Right lobe of liver (tissue), 6 donors: ENCODE measurements at regions of chr14 and their contacts with region 1.

Region 1: DNA sequence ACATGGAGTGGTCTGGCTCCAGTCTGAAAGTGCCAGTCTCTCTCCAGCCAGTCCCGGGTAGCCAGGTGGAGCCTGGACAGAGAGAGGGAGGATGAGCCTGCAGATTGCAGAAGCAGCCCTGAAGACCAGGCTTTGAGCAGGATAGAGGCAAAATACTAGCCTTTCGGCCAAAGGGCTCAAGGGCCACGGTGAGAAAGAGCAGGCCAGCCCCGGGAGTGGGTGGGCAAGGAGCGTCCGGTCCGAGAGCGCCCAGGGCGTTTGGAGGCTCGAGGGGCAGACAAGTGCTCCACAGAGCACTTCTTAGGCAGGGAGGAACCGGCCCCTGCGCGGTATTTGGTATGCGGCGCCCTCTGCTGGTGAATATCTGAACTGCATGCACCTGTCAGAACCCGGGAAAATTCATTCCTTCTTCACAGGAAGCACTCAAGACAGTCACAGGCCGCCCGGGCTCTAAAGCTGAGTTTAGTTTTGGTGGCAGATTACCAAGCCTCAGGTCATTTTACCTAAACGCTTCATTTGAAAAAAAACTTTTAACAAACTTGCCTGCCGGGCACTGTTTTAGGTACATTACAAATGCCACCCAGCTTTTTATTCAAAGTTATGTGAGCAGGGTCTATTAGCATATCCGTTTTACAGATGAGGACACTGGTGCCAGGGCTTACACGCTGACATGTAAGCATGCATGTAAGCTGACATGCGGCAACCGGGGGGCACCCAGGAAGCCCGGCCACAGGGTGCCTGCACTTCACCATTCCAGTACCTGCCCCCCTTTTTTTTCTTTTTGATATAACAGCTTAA is 21.0 kb upstream of the PSMC1 start:
- DNase-seq: peak; percentile 67 to 73 (median 71)
- ATAC-seq: peak; percentile 96 to 99 (median 98)
- H3K4me3 ChIP-seq: no peak overlapping the region
- H3K27ac ChIP-seq: no peak overlapping the region
- H3K4me1 ChIP-seq: peaks cover 0 to 3% (median 0%) of the 10 kb centered on the region in 4 donors
- H3K27me3 ChIP-seq: no peaks in the 10 kb centered on the region
- CTCF ChIP-seq: peak; percentile 92 to 97 (median 94)
- POLR2A ChIP-seq: no peak

Region 2: DNA sequence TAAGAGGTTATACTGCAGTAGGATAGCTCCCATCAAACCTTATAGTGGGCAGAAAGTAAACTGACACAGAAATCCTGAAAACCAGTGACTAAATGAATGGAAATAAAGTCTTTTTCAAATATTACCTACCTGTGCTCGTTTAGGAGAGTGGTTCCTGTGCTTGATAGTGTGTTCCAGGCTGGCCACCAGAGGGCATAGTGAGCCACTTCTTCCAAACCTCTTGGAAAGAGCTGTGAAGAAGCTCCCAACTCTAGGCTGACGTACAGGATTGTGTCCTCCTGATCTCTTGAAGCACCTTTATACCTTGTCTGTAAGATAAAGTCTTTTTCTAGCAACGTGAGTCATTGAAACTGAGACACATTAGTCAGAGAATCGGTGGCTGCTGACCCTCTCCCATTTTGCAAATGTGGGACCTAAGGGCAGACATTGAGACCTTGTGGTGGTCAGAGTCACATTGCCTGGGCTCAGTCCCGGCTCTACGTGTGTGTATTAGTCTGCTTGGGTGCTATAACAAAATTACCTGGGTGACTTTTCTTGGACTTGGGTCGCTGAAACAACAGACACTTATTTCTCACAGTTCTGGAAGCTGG is 262.0 kb before region 1 on chr14:
- intact Hi-C with region 1: loop called (anchors 5 to 10 kb)
- DNase-seq: peak; percentile 62 to 77 (median 69)
- ATAC-seq: peak; percentile 95 to 99 (median 98)
- H3K4me3 ChIP-seq: no peak overlapping the region
- H3K27ac ChIP-seq: no peak overlapping the region
- H3K4me1 ChIP-seq: no peaks in the 10 kb centered on the region
- H3K27me3 ChIP-seq: no peaks in the 10 kb centered on the region
- CTCF ChIP-seq: peak; percentile 83 to 89 (median 88)
- POLR2A ChIP-seq: no peak

Region 3: GRCh38 chr14:90368946-90369721 is 133.8 kb after region 1 on chr14:
- intact Hi-C with region 1: no loop called
- DNase-seq: no peak
- ATAC-seq: peak in 3 of 4 donors; percentile 43 to 96 (median 66)
- H3K4me3 ChIP-seq: no peak overlapping the region
- H3K27ac ChIP-seq: no peak overlapping the region
- H3K4me1 ChIP-seq: peaks cover 0 to 8% (median 0%) of the 10 kb centered on the region in 4 donors
- H3K27me3 ChIP-seq: no peaks in the 10 kb centered on the region
- CTCF ChIP-seq: peak in 1 of 4 donors; percentile 10
- POLR2A ChIP-seq: no peak